ENCODE measurements at regions of chr2 and their contacts with region 1.

Region 1: GRCh38 chr2:236569573-236569973 is at the start of gene ACKR3:
- DNase-seq: peak; percentile 83 to 91
- ATAC-seq: peak; percentile 88
- H3K4me3 ChIP-seq: peak within 1 kb of the TSS; percentile 67 to 80
- H3K27ac ChIP-seq: peak within 1 kb of the TSS; percentile 80 to 93
- H3K4me1 ChIP-seq: peaks cover 0 to 11% of the 10 kb centered on the region in 2 donors
- H3K27me3 ChIP-seq: no peaks in the 10 kb centered on the region
- total RNA-seq, gene ACKR3: 113 to 116 TPM

Region 2: GRCh38 chr2:236333417-236334121 is 236.0 kb before region 1 on chr2:
- intact Hi-C with region 1: no loop called
- DNase-seq: no peak
- ATAC-seq: no peak
- H3K4me3 ChIP-seq: no peak overlapping the region
- H3K27ac ChIP-seq: no peak overlapping the region
- H3K4me1 ChIP-seq: no peaks in the 10 kb centered on the region
- H3K27me3 ChIP-seq: no peaks in the 10 kb centered on the region

Region 3: DNA sequence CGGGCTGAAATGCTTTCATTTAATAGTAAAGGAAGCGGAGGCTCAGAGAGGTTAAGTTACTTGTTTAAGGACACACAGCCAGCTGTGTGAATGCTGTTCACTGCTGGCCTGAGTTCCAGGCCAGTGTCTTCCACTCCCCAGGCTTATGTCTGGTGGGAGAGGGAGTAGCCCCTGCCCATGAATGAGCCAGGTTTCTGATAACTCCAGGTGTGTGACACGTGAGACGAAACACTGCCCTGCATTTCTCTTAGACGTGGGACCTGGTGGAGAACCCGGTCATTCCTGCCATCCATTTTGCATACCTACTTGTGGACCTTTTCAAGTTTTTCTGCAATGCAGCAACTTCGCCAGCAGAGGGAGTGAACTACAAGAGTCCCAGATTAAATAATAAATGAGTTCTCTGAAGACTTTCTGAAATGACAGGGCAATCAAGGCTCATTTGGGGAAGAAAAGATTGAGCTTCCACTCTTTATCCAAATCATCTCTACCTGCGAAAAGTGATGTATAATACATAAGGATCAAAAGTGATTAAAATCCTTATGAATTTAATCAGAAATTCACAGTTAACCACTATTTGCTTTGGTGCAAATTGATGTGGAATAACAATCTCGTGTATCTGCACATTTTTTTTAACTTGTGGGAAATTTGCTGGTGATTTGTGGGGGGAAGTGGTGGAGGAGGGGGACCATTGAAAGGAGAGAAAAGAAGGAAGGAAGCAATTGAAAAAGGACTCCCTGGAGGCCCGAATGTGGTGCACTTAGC is 226.0 kb before region 1 on chr2:
- intact Hi-C with region 1: loop called in 1 of 2 experiments (anchors 10 kb)
- DNase-seq: peak in 1 of 2 donors; percentile 67
- ATAC-seq: no peak
- H3K4me3 ChIP-seq: no peak overlapping the region
- H3K27ac ChIP-seq: no peak overlapping the region
- H3K4me1 ChIP-seq: no peaks in the 10 kb centered on the region
- H3K27me3 ChIP-seq: no peaks in the 10 kb centered on the region

Region 4: DNA sequence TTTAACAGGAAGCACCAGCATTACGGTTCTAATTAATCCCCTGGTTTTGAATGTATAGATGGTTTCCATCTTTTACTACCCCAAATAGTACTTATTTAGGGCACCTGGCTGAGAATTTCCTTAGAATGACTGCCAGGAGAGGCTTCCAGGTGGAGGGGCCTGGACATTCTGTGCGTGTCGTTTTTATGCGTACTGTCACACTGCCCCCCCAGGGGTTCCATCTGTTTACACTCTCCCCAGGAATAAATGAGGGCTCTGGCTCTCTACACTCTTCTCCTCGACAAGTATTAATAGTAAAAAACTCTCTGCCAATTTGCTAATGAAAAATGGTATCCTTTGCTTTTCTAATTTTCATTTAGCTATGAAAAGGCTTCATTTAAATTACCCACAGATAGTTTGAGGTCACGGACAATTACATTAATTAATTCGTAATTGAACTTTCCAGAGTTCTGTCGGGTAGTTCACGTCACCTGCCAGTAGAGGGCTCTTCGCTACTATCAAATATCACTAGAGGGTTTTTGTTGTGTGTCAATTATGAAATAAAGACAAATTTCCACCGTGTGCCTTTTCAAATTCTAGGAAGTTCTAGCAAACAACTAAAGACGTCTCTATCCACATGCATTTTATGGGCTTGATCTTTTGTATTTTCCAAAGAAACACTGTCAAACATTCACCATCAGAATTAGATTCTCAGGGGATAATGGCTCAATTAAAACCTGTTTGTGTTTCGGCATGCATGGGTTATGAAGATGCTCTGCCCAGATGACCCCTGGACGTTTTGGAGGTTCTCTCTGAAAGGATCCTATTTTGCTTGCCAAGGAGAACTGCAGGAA is 216.6 kb before region 1 on chr2:
- intact Hi-C with region 1: loop called (anchors 10 kb)
- DNase-seq: no peak
- ATAC-seq: no peak
- H3K4me3 ChIP-seq: no peak overlapping the region
- H3K27ac ChIP-seq: no peak overlapping the region
- H3K4me1 ChIP-seq: no peaks in the 10 kb centered on the region
- H3K27me3 ChIP-seq: no peaks in the 10 kb centered on the region

Region 5: GRCh38 chr2:236512902-236513435 is 56.6 kb before region 1 on chr2:
- intact Hi-C with region 1: loop called in 1 of 2 experiments (anchors 5 kb)
- DNase-seq: peak; percentile 71 to 85
- ATAC-seq: peak; percentile 81
- H3K4me3 ChIP-seq: no peak overlapping the region
- H3K27ac ChIP-seq: no peak overlapping the region
- H3K4me1 ChIP-seq: peaks cover 0 to 1% of the 10 kb centered on the region in 2 donors
- H3K27me3 ChIP-seq: no peaks in the 10 kb centered on the region

Region 6: DNA sequence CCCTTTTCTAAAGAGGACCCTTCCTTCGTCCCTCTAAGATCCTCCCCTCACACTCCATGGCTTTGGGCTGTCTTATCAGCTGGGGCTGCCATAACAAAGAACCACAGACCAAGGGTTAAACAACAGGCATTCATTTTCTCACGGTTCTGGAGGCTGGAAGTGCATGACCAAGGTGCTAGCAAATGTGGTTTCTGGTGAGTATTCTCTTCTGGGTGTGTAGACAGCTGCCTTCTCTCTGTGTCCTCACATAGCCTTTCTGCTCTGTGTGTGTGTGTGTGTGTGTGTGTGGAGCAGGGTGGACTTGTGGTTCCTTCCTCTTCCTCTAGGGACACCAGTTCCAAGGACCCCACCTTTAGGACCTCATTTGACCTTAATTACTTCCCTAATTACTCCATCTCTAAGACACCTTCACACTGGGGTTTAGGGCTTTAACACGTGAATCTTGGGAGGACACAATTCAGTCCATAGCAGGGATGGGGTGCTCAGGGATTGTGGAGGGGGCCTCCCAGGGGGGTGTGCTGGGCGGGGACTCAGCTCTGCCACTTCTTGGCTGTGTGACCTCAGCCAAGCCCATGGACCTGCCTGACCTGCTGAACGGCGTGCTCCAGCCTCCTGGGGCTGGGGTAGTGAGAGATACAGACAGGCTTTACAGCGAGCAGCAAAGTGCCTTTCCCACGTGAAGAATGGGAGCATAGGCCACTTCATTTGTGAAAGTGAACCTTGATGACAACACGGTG is 38.0 kb after region 1 on chr2:
- intact Hi-C with region 1: no loop called
- DNase-seq: no peak
- ATAC-seq: no peak
- H3K4me3 ChIP-seq: no peak overlapping the region
- H3K27ac ChIP-seq: no peak overlapping the region
- H3K4me1 ChIP-seq: no peaks in the 10 kb centered on the region
- H3K27me3 ChIP-seq: no peaks in the 10 kb centered on the region

Region 7: GRCh38 chr2:236782938-236783337 is 213.4 kb after region 1 on chr2:
- intact Hi-C with region 1: loop called (anchors 5 kb)
- DNase-seq: no peak
- ATAC-seq: no peak
- H3K4me3 ChIP-seq: no peak overlapping the region
- H3K27ac ChIP-seq: no peak overlapping the region
- H3K4me1 ChIP-seq: no peaks in the 10 kb centered on the region
- H3K27me3 ChIP-seq: no peaks in the 10 kb centered on the region

Region 8: GRCh38 chr2:237026981-237027711 is 457.6 kb after region 1 on chr2:
- intact Hi-C with region 1: loop called (anchors 5 kb)
- DNase-seq: peak; percentile 80 to 88
- ATAC-seq: peak; percentile 86
- H3K4me3 ChIP-seq: no peak overlapping the region
- H3K27ac ChIP-seq: no peak overlapping the region
- H3K4me1 ChIP-seq: no peaks in the 10 kb centered on the region
- H3K27me3 ChIP-seq: no peaks in the 10 kb centered on the region

Region 9: DNA sequence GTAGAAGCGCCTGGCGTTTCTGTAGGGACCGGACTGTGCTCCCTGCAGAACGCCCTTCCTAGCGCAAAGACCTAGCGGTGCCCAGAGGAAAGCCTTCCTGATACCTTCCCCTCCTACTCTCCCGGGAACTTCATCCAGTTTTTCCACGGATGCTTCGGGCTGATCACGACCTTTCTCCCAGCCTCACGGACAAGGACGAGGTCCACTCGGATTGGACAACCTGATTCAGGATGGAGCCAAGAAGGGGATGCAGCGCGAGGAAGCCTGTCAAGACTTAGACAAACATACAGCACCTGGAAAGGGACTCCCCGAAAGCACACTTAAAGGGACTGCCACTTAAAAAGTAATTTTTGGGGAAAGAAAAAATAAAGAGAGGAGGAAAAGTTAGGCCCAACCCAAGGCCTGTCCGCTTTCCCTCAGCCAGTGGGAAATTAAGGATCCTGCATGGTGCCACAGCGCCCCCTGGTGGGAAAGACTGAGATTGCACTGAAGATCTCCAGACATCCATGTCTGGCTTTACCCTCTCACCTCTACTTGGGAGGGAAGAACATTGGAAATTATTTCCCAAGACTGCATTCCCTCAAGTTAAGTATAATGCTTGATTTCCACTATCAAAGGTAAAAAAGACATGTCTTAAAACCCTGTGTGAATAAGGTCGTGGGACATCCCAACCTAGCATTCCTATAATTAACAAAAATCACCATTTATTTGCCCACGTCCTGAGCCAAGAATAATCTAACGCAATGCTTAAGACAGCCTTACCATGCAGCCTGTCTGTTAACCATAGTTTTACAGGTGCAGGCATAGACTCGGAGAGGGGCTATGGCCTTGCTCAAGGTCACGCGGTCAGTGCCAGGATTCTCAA is 502.7 kb after region 1 on chr2:
- intact Hi-C with region 1: loop called in 1 of 2 experiments (anchors 5 kb)
- DNase-seq: peak; percentile 82 to 91
- ATAC-seq: peak; percentile 85
- H3K4me3 ChIP-seq: no peak overlapping the region
- H3K27ac ChIP-seq: no peak overlapping the region
- H3K4me1 ChIP-seq: peaks cover 0 to 5% of the 10 kb centered on the region in 2 donors
- H3K27me3 ChIP-seq: no peaks in the 10 kb centered on the region